Naive thymus-derived CD4-positive, alpha-beta T cell (primary cell): ENCODE measurements at regions of chr21 and their contacts with region 1.

Region 1: GRCh38 chr21:33360881-33361602 is 36.3 kb downstream of the IFNAR1 start:
- DNase-seq: peak; percentile 76 to 88 (median 84)
- ATAC-seq: peak; percentile 86
- H3K4me3 ChIP-seq: peak overlapping the region; percentile 76
- H3K4me3 Mint-ChIP-seq: peak overlapping the region; percentile 81 to 96 (median 88)
- H3K27ac ChIP-seq: peak overlapping the region; percentile 63
- H3K27ac Mint-ChIP-seq: peak overlapping the region; percentile 76 to 97 (median 92)
- H3K4me1 ChIP-seq: peaks cover 7 to 12% of the 10 kb centered on the region in 2 donors
- H3K4me1 Mint-ChIP-seq: peaks cover 14 to 25% (median 20%) of the 10 kb centered on the region in 7 donors
- H3K27me3 ChIP-seq: no peaks in the 10 kb centered on the region
- H3K27me3 Mint-ChIP-seq: no peaks in the 10 kb centered on the region

Region 2: GRCh38 chr21:32962268-32962667 is 398.8 kb before region 1 on chr21:
- CTCF ChIA-PET with region 1: no interaction called
- POLR2A ChIA-PET with region 1: no interaction called
- intact Hi-C with region 1: no loop called
- DNase-seq: no peak
- ATAC-seq: no peak
- H3K4me3 ChIP-seq: no peak overlapping the region
- H3K4me3 Mint-ChIP-seq: no peak overlapping the region
- H3K27ac ChIP-seq: no peak overlapping the region
- H3K27ac Mint-ChIP-seq: no peak overlapping the region
- H3K4me1 ChIP-seq: peaks cover 0 to 4% of the 10 kb centered on the region in 2 donors
- H3K4me1 Mint-ChIP-seq: peaks cover 0 to 5% (median 0%) of the 10 kb centered on the region in 7 donors
- H3K27me3 ChIP-seq: no peaks in the 10 kb centered on the region
- H3K27me3 Mint-ChIP-seq: peaks cover 10 to 44% (median 27%) of the 10 kb centered on the region in 5 donors

Region 3: GRCh38 chr21:33205476-33205875 is 155.6 kb before region 1 on chr21:
- CTCF ChIA-PET with region 1: interaction called, 25 read pairs
- POLR2A ChIA-PET with region 1: interaction called, 5 read pairs
- intact Hi-C with region 1: no loop called
- DNase-seq: no peak
- ATAC-seq: peak; percentile 65
- H3K4me3 ChIP-seq: peak overlapping the region; percentile 5
- H3K4me3 Mint-ChIP-seq: peak overlapping the region; percentile 5 to 83 (median 60)
- H3K27ac ChIP-seq: peak overlapping the region; percentile 12
- H3K27ac Mint-ChIP-seq: peak overlapping the region; percentile 21 to 90 (median 82)
- H3K4me1 ChIP-seq: peaks cover 21 to 33% of the 10 kb centered on the region in 2 donors
- H3K4me1 Mint-ChIP-seq: peaks cover 42 to 73% (median 59%) of the 10 kb centered on the region in 7 donors
- H3K27me3 ChIP-seq: no peaks in the 10 kb centered on the region
- H3K27me3 Mint-ChIP-seq: no peaks in the 10 kb centered on the region

Region 4: DNA sequence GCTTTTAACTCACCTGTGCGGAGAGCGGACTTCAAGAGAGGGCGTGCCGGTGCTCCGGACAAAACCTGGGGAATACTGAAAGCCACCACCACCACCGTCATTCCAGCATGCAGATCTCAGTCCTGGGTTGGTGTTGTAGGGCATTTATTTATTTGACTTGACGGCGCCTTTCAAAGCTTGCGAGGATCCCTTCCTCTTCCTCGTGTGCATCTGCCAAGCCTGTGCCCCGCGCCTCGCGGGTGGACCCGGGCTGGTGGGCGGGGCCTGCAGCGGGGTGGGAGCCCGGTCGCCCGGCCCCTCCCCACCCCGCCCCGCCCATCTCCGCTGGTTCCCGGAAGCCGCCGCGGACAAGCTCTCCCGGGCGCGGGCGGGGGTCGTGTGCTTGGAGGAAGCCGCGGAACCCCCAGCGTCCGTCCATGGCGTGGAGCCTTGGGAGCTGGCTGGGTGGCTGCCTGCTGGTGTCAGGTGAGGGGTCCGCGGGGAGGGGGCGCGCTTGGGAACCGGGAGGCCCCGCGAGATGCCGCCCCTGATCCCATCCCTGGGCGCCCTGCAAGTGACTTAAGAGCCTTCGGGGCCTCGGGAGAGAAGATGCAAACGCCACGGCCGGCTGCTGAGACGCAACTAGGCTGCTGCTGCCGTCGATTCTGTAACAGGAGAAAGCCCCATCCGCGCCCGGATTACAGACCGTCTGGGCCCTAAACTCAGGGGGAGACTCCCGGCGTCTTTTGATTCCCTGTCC is 94.8 kb before region 1 on chr21 and contains the start of gene IL10RB:
- CTCF ChIA-PET with region 1: no interaction called
- POLR2A ChIA-PET with region 1: interaction called, 15 read pairs
- intact Hi-C with region 1: loop called (anchors 1 to 10 kb)
- DNase-seq: peak; percentile 53 to 80 (median 62)
- ATAC-seq: peak; percentile 88
- H3K4me3 ChIP-seq: peak within 1 kb of the TSS; percentile 87
- H3K4me3 Mint-ChIP-seq: peak within 1 kb of the TSS; percentile 86 to 99 (median 96)
- H3K27ac ChIP-seq: peak within 1 kb of the TSS; percentile 83
- H3K27ac Mint-ChIP-seq: peak within 1 kb of the TSS; percentile 91 to 97 (median 94)
- H3K4me1 ChIP-seq: peaks cover 23 to 38% of the 10 kb centered on the region in 2 donors
- H3K4me1 Mint-ChIP-seq: peaks cover 45 to 78% (median 57%) of the 10 kb centered on the region in 7 donors
- H3K27me3 ChIP-seq: no peaks in the 10 kb centered on the region
- H3K27me3 Mint-ChIP-seq: no peaks in the 10 kb centered on the region
- total RNA-seq, gene IL10RB: 17.6 to 35.0 (median 27.2) TPM

Region 5: GRCh38 chr21:33324291-33325221 is 36.5 kb before region 1 on chr21 and contains the start of gene IFNAR1:
- CTCF ChIA-PET with region 1: interaction called, 18 read pairs
- POLR2A ChIA-PET with region 1: interaction called, 58 read pairs
- intact Hi-C with region 1: loop called (anchors 1 kb)
- DNase-seq: peak; percentile 94 to 100 (median 98)
- ATAC-seq: peak; percentile 94
- H3K4me3 ChIP-seq: peak within 1 kb of the TSS; percentile 87
- H3K4me3 Mint-ChIP-seq: no peak within 1 kb of the TSS
- H3K27ac ChIP-seq: peak within 1 kb of the TSS; percentile 94
- H3K27ac Mint-ChIP-seq: no peak within 1 kb of the TSS
- H3K4me1 ChIP-seq: peaks cover 21 to 23% of the 10 kb centered on the region in 2 donors
- H3K4me1 Mint-ChIP-seq: peaks cover 0 to 33% (median 26%) of the 10 kb centered on the region in 7 donors
- H3K27me3 ChIP-seq: no peaks in the 10 kb centered on the region
- H3K27me3 Mint-ChIP-seq: peaks cover 0 to 2% (median 0%) of the 10 kb centered on the region in 5 donors
- total RNA-seq, gene IFNAR1: 24.7 to 60.8 (median 40.0) TPM

Region 6: DNA sequence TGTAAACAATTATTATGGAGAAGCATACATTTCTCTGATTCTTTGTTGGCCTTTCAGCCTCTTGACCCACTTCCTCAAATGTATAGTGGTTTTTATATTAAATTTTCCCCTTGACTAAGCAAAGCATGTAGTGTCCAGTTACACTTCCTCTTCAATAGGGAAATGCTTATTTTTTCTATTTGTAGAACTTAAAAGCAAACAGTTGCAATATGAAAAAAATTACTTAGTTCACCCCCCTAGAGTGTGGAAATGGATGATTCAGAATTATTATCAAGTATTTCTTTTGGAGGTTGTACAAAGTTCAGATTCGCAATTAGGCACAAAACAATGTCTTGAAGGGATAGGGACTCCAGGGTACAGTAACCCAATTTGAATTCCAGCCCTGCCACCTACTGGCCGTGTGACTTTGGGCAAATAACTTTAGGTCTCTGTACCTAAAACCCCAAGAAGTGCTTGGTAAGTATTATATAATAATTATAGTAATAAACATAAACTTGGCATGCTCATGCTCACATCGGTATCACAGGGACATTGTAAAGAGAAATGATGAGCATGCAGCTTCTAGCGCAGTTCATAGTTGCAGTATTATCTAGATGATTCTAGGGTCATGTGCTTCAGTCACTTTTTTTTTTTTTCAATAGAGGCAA is 13.5 kb after region 1 on chr21:
- CTCF ChIA-PET with region 1: interaction called, 13 read pairs
- POLR2A ChIA-PET with region 1: interaction called, 31 read pairs
- intact Hi-C with region 1: no loop called
- DNase-seq: peak in 7 of 9 donors; percentile 25 to 61 (median 49)
- ATAC-seq: peak; percentile 88
- H3K4me3 ChIP-seq: no peak overlapping the region
- H3K4me3 Mint-ChIP-seq: no peak overlapping the region
- H3K27ac ChIP-seq: no peak overlapping the region
- H3K27ac Mint-ChIP-seq: peak overlapping the region in 2 of 9 donors; percentile 21 to 45
- H3K4me1 ChIP-seq: peaks cover 0 to 3% of the 10 kb centered on the region in 2 donors
- H3K4me1 Mint-ChIP-seq: peaks cover 6 to 23% (median 12%) of the 10 kb centered on the region in 7 donors
- H3K27me3 ChIP-seq: peaks cover 0 to 6% of the 10 kb centered on the region in 2 donors
- H3K27me3 Mint-ChIP-seq: peaks cover 0 to 36% (median 4%) of the 10 kb centered on the region in 5 donors

Region 7: DNA sequence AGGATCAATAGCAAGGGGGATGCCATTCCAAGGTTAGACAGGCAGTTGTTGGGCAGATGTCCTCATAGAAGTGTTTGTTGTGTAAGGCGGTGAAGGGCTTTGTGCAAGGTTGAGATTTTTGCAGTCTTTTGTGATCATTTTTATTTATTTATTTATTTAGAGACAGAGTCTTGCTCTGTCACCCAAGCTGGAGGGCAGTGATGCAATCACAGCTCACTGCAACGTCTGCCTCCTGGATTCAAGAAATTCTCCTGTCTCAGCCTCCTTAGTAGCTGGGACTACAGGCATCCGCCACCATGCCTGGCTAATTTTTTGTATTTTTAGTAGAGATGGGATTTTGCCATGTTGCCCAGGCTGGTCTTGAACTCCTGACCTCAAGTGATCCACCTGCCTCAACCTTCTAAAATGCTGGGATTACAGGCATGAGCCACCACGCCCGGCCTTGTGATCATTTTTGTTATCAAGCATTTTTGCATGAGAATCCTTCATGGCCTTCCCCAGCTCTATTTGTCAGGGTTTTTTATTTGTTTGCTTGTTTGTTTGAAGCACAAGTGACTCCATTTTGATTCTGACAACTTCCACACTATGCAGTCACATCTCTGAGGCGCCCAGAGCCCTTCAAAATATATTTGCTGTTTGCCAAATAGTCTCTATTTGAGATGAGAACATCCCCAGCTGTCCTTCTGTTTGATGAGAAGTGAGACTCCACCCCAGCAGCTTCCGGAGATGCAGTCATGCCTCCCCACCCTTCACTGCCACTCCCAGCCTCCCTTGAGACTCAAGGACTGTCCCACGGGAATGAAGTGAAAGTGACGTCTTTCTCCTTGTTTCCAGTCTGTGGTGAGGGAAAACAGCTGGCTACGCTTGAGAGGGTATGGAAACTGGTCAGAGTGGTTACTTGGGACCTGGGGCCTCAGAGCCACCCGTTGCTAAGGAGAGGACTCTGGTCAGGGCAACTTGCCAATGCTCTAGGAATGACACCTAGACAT is 80.7 kb after region 1 on chr21:
- CTCF ChIA-PET with region 1: interaction called, 17 read pairs
- POLR2A ChIA-PET with region 1: interaction called, 10 read pairs
- intact Hi-C with region 1: loop called (anchors 1 kb)
- DNase-seq: no peak
- ATAC-seq: no peak
- H3K4me3 ChIP-seq: no peak overlapping the region
- H3K4me3 Mint-ChIP-seq: no peak overlapping the region
- H3K27ac ChIP-seq: no peak overlapping the region
- H3K27ac Mint-ChIP-seq: peak overlapping the region in 6 of 9 donors; percentile 9 to 78 (median 55)
- H3K4me1 ChIP-seq: no peaks in the 10 kb centered on the region
- H3K4me1 Mint-ChIP-seq: peaks cover 4 to 10% (median 6%) of the 10 kb centered on the region in 7 donors
- H3K27me3 ChIP-seq: no peaks in the 10 kb centered on the region
- H3K27me3 Mint-ChIP-seq: no peaks in the 10 kb centered on the region

Region 8: DNA sequence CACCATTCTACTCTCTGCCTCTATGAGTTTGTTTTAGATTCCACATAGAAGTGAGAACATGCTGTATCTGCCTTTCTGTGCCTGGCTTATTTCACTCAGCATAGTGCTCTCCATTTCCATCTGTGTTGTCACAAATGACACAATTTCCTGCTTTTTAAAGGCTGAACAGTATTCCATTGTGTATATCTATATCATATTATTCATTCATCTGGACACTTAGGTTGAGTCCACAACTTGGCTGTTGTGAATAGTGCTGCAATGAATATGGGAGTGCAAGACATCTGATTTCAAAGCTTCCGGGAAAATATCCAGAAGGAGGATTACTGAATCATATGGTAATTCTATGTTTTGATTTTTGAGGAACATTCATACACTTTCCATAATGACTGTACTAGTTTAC is 247.5 kb after region 1 on chr21:
- CTCF ChIA-PET with region 1: interaction called, 5 read pairs
- POLR2A ChIA-PET with region 1: interaction called, 4 read pairs
- intact Hi-C with region 1: loop called in 1 of 2 experiments (anchors 5 kb)
- DNase-seq: no peak
- ATAC-seq: no peak
- H3K4me3 ChIP-seq: no peak overlapping the region
- H3K4me3 Mint-ChIP-seq: no peak overlapping the region
- H3K27ac ChIP-seq: no peak overlapping the region
- H3K27ac Mint-ChIP-seq: peak overlapping the region in 1 of 9 donors; percentile 7
- H3K4me1 ChIP-seq: no peaks in the 10 kb centered on the region
- H3K4me1 Mint-ChIP-seq: peaks cover 0 to 5% (median 4%) of the 10 kb centered on the region in 7 donors
- H3K27me3 ChIP-seq: no peaks in the 10 kb centered on the region
- H3K27me3 Mint-ChIP-seq: no peaks in the 10 kb centered on the region